ENCODE measurements at regions of chr1 and their contacts with region 1.

Region 1: GRCh38 chr1:31938174-31938950 is at the start of gene PTP4A2:
- DNase-seq: peak; percentile 88
- ATAC-seq: peak; percentile 89
- H3K4me3 ChIP-seq: peak within 1 kb of the TSS; percentile 66
- H3K27ac ChIP-seq: peak within 1 kb of the TSS; percentile 98
- H3K4me1 ChIP-seq: peaks cover 16% of the 10 kb centered on the region
- H3K27me3 ChIP-seq: no peaks in the 10 kb centered on the region
- CTCF ChIP-seq: peak; percentile 86
- POLR2A ChIP-seq: peak; percentile 78
- RAD21 ChIP-seq: peak; percentile 32; the same call in 1 of the 2 replicates
- total RNA-seq, gene PTP4A2: 328 and 537 TPM in 2 replicates

Region 2: DNA sequence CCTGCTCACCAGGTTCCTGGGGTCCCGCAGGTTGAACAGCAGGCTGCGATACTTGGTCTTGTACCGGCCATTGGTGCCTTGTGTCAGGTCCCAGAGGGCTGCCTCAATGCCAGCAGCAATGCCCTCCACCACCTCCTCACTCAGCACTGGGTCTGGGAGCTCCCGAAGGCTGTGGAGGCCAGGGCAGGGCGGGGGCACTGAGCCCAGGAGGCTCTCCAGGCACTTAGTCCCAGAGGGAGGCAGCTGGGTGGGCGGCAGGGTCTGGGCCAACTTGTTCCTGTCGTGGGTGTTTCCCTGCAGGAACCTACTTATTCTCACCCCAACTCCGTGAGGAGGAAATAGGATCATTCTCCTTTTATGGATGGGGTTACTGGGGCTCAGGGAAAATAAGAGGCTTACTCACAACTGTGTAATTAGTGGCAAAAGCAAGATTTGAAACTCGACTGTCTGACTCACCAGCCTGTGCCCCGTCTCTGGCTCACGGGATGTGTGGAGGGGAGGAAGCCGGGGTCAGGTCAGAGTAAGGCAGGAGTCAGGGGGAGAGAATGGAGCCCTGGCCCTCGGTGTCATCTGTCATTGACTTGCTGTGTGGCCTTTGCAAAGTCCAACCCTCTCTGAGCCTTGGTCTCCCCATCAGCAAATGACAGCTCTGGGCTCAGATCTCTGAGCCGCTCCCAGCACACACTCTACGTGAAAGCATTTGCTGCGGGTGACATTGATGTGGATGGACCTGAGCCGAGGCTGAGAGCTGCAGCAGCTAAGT is 139.7 kb before region 1 on chr1:
- CTCF ChIA-PET with region 1: no interaction called
- POLR2A ChIA-PET with region 1: no interaction called
- dilution Hi-C with region 1: no loop called
- in situ Hi-C with region 1: no loop called
- intact Hi-C with region 1: loop called (anchors 2 kb)
- DNase-seq: peak; percentile 90
- ATAC-seq: peak; percentile 82
- H3K4me3 ChIP-seq: peak overlapping the region; percentile 58
- H3K27ac ChIP-seq: peak overlapping the region; percentile 77
- H3K4me1 ChIP-seq: peaks cover 32% of the 10 kb centered on the region
- H3K27me3 ChIP-seq: no peaks in the 10 kb centered on the region
- CTCF ChIP-seq: no peak
- POLR2A ChIP-seq: peak; percentile 55
- RAD21 ChIP-seq: 0 out of 2 replicates have a peak, but pooled peaks have one; percentile 13

Region 3: GRCh38 chr1:31904339-31905092 is 33.8 kb before region 1 on chr1:
- CTCF ChIA-PET with region 1: no interaction called
- POLR2A ChIA-PET with region 1: no interaction called
- dilution Hi-C with region 1: no loop called
- in situ Hi-C with region 1: no loop called
- intact Hi-C with region 1: no loop called
- DNase-seq: peak; percentile 43
- ATAC-seq: no peak
- H3K4me3 ChIP-seq: no peak overlapping the region
- H3K27ac ChIP-seq: no peak overlapping the region
- H3K4me1 ChIP-seq: peaks cover 1% of the 10 kb centered on the region; the same call in 1 of the 2 replicates
- H3K27me3 ChIP-seq: no peaks in the 10 kb centered on the region
- CTCF ChIP-seq: no peak
- POLR2A ChIP-seq: no peak
- RAD21 ChIP-seq: no peak

Region 4: GRCh38 chr1:31949862-31950261 is 11.5 kb after region 1 on chr1:
- CTCF ChIA-PET with region 1: interaction called, 11 read pairs
- POLR2A ChIA-PET with region 1: interaction called, 10 read pairs
- dilution Hi-C with region 1: no loop called
- in situ Hi-C with region 1: no loop called
- intact Hi-C with region 1: no loop called
- DNase-seq: no peak
- ATAC-seq: no peak
- H3K4me3 ChIP-seq: no peak overlapping the region
- H3K27ac ChIP-seq: no peak overlapping the region
- H3K4me1 ChIP-seq: peaks cover 11% of the 10 kb centered on the region
- H3K27me3 ChIP-seq: no peaks in the 10 kb centered on the region
- CTCF ChIP-seq: no peak
- POLR2A ChIP-seq: no peak
- RAD21 ChIP-seq: no peak

Measured in IMR-90 (cell line).